BJ (cell line): ENCODE measurements at regions of chr11 and their contacts with region 1.

Region 1: DNA sequence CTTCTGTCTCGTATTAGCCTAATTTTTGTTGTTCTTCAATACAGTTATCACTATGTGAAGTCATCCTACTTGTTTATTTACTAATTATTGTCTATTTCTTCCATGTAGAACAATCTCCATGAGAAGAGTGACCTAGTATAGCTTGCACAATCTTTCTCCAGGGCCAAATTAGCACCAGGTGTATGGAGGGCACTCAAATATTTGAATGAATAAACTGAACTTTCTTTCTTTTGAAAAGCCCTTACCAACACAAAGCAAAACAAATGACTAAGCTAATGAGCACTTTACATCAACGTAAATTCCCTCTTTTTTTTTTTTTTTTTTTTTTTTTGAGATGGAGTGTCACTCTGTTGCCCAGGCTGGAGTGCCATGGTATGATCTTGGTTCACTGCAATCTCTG is 34.2 kb downstream of the ABTB2 start:
- DNase-seq: no peak
- H3K4me3 ChIP-seq: no peak overlapping the region
- H3K27me3 ChIP-seq: no peaks in the 10 kb centered on the region
- CTCF ChIP-seq: no peak

Region 2: DNA sequence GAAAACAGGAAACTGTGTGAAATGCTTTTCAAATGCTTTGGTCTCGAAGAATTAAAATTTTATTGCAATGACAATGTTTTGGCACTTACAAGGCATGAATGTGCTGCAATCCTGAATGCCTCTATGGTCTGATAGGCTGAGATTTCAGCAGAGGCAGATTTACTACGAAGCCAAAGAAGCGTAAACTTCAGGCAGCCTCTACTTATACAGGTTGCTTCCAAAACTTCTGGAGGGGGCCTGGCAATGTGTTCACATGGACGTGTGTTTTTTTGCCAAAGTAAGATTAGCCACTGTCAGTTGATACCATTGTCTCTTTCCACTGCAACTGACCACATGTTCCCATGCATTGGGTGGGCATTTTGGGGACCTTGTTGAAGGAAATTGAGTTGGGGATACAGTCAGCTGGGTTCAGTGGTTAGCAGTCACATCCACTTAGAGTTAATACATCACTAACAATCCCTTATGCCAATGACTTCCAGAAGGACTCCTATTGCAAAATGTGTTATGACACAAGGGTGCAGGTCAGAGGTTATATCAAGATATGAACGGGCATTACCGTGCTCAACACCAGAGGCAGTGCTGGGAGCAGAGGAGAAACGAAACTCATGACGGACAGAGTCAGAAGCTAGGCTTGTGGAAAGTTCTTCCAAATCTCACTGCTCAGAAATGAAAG is 14.6 kb before region 1 on chr11:
- CTCF ChIA-PET with region 1: no interaction called
- POLR2A ChIA-PET with region 1: interaction called, 16 read pairs
- DNase-seq: no peak
- H3K4me3 ChIP-seq: no peak overlapping the region
- H3K27me3 ChIP-seq: no peaks in the 10 kb centered on the region
- CTCF ChIP-seq: no peak

Region 3: DNA sequence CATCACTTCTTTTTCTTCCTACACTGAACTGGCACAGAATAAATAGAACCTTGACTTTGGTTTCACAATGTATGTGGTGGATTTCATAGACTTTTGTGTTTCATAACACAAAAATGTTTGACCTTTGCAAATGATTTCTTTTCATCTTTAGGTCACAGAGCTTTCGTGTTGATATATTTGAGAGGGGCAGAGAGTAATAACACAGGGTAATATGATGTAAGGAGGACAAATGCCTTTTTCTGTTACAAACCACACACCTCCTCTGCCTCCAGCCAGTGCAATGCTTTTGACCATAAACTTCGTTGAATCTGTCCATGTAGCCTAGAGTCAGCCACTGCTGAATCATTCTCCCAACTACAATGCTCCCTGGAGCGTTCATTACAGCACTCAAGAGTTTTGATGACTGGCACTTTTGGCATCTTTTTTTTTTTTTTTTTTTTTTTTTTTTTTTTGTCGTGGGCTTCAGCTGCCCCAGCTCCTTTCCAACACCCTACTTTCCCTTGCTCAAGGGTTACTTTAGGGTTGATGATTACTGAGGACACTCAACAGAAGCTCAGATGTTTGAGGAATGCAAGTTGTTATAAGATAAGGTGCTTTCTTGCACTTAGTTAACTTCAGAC is 103.7 kb after region 1 on chr11:
- CTCF ChIA-PET with region 1: no interaction called
- POLR2A ChIA-PET with region 1: no interaction called
- DNase-seq: peak; percentile 83
- H3K4me3 ChIP-seq: no peak overlapping the region
- H3K27me3 ChIP-seq: no peaks in the 10 kb centered on the region
- CTCF ChIP-seq: no peak

Region 4: GRCh38 chr11:34438529-34439507 is 115.2 kb after region 1 on chr11 and contains the start of gene CAT:
- CTCF ChIA-PET with region 1: no interaction called
- POLR2A ChIA-PET with region 1: no interaction called
- DNase-seq: peak; percentile 86
- H3K4me3 ChIP-seq: peak within 1 kb of the TSS; percentile 69
- H3K27me3 ChIP-seq: no peaks in the 10 kb centered on the region
- CTCF ChIP-seq: no peak
- polyA plus RNA-seq, gene CAT: 101 and 128 TPM in 2 replicates